ENCODE measurements at regions of chr12 and their contacts with region 1.

Region 1: GRCh38 chr12:17763366-17763765 is 326.6 kb downstream of the RERGL start:
- DNase-seq: no peak
- ATAC-seq: no peak
- H3K4me3 ChIP-seq: no peak overlapping the region
- H3K27ac ChIP-seq: no peak overlapping the region
- H3K4me1 ChIP-seq: no peaks in the 10 kb centered on the region
- H3K27me3 ChIP-seq: no peaks in the 10 kb centered on the region
- CTCF ChIP-seq: no peak
- POLR2A ChIP-seq: no peak

Region 2: DNA sequence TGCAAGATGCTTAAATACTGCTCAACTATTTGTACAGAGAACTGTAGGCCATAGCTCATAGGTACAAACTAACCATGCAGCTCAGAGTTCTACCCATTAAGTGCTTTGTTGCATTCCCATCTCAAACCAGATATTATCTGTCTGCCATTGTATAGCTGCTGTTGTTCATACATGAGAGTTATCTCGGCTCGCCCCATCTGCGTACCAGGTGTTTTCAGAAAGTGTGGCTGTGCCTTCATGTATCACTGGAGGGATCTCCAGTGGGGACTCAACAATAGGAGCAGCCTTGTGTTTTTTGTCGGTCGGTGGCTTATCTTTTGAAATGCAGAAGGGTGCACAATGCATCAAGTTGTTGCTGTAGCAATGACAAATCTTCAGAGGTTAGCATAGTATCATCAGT is 351.7 kb before region 1 on chr12:
- in situ Hi-C with region 1: no loop called
- intact Hi-C with region 1: no loop called
- DNase-seq: no peak
- ATAC-seq: no peak
- H3K4me3 ChIP-seq: no peak overlapping the region
- H3K27ac ChIP-seq: no peak overlapping the region
- H3K4me1 ChIP-seq: no peaks in the 10 kb centered on the region
- H3K27me3 ChIP-seq: no peaks in the 10 kb centered on the region
- CTCF ChIP-seq: no peak
- POLR2A ChIP-seq: no peak

Region 3: GRCh38 chr12:17818931-17819330 is 55.6 kb after region 1 on chr12:
- in situ Hi-C with region 1: no loop called
- intact Hi-C with region 1: no loop called
- DNase-seq: no peak
- ATAC-seq: no peak
- H3K4me3 ChIP-seq: no peak overlapping the region
- H3K27ac ChIP-seq: no peak overlapping the region
- H3K4me1 ChIP-seq: no peaks in the 10 kb centered on the region
- H3K27me3 ChIP-seq: no peaks in the 10 kb centered on the region
- CTCF ChIP-seq: no peak
- POLR2A ChIP-seq: no peak

Region 4: GRCh38 chr12:17841496-17841895 is 78.1 kb after region 1 on chr12:
- in situ Hi-C with region 1: loop called in 3 of 4 experiments (anchors 10 kb)
- intact Hi-C with region 1: no loop called
- DNase-seq: no peak
- ATAC-seq: no peak
- H3K4me3 ChIP-seq: no peak overlapping the region
- H3K27ac ChIP-seq: no peak overlapping the region
- H3K4me1 ChIP-seq: no peaks in the 10 kb centered on the region
- H3K27me3 ChIP-seq: no peaks in the 10 kb centered on the region
- CTCF ChIP-seq: no peak
- POLR2A ChIP-seq: no peak

Region 5: DNA sequence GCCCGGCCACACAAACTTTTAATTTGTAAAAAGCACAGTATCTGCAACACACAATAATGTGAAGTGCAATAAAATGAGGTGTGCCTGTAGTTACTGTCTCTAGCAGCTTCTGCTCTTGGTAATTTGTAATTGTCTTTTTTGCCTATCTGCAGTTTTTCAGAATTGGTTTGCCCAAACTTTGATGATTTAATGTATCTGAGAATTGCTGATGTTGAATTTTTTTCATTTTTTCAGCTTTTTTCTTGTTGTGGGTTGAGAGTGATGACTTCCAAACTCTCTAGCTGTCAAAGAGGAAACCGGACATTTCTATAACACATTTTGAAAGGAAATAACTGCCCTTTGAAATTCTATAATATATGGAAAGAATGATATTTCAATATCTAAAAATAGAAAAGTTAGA is 89.7 kb after region 1 on chr12:
- in situ Hi-C with region 1: loop called (anchors 5 to 10 kb)
- intact Hi-C with region 1: no loop called
- DNase-seq: no peak
- ATAC-seq: no peak
- H3K4me3 ChIP-seq: no peak overlapping the region
- H3K27ac ChIP-seq: no peak overlapping the region
- H3K4me1 ChIP-seq: no peaks in the 10 kb centered on the region
- H3K27me3 ChIP-seq: no peaks in the 10 kb centered on the region
- CTCF ChIP-seq: no peak
- POLR2A ChIP-seq: no peak

Region 6: GRCh38 chr12:17918013-17918412 is 154.6 kb after region 1 on chr12:
- in situ Hi-C with region 1: no loop called
- intact Hi-C with region 1: no loop called
- DNase-seq: no peak
- ATAC-seq: no peak
- H3K4me3 ChIP-seq: no peak overlapping the region
- H3K27ac ChIP-seq: no peak overlapping the region
- H3K4me1 ChIP-seq: no peaks in the 10 kb centered on the region
- H3K27me3 ChIP-seq: no peaks in the 10 kb centered on the region
- CTCF ChIP-seq: no peak
- POLR2A ChIP-seq: no peak

Region 7: GRCh38 chr12:17999174-17999801 is 235.9 kb after region 1 on chr12:
- in situ Hi-C with region 1: no loop called
- intact Hi-C with region 1: no loop called
- DNase-seq: no peak
- ATAC-seq: no peak
- H3K4me3 ChIP-seq: no peak overlapping the region
- H3K27ac ChIP-seq: no peak overlapping the region
- H3K4me1 ChIP-seq: no peaks in the 10 kb centered on the region
- H3K27me3 ChIP-seq: no peaks in the 10 kb centered on the region
- CTCF ChIP-seq: no peak
- POLR2A ChIP-seq: no peak